PC-9 (cell line): ENCODE measurements at regions of chr5 and their contacts with region 1.

Region 1: GRCh38 chr5:23026252-23027170 is 173.4 kb upstream of the CDH12 start:
- DNase-seq: no peak
- H3K4me3 ChIP-seq: no peak overlapping the region
- H3K27ac ChIP-seq: no peak overlapping the region
- H3K4me1 ChIP-seq: no peaks in the 10 kb centered on the region
- H3K27me3 ChIP-seq: no peaks in the 10 kb centered on the region
- CTCF ChIP-seq: no peak

Region 2: DNA sequence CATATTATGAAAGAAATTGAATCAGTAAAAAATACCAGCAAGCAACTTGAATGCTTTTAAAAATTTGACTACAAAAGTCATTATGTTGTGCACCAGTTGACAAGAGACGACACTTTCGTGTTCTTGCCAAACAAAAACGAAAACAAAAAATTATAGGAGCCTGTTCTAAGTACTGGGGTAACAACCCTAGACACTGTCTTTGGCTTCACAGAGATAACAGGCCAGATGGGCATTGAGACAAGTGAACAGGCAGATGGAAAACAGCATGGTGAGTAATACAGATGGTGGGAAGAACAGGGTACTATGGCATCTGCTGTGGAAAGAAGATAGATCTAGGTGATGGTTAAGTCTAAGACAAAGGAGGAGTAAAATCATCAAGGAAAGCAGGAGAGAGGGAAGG is 272.4 kb before region 1 on chr5:
- CTCF ChIA-PET with region 1: no interaction called
- POLR2A ChIA-PET with region 1: no interaction called
- intact Hi-C with region 1: no loop called
- DNase-seq: no peak
- H3K4me3 ChIP-seq: no peak overlapping the region
- H3K27ac ChIP-seq: no peak overlapping the region
- H3K4me1 ChIP-seq: no peaks in the 10 kb centered on the region
- H3K27me3 ChIP-seq: no peaks in the 10 kb centered on the region
- CTCF ChIP-seq: no peak

Region 3: DNA sequence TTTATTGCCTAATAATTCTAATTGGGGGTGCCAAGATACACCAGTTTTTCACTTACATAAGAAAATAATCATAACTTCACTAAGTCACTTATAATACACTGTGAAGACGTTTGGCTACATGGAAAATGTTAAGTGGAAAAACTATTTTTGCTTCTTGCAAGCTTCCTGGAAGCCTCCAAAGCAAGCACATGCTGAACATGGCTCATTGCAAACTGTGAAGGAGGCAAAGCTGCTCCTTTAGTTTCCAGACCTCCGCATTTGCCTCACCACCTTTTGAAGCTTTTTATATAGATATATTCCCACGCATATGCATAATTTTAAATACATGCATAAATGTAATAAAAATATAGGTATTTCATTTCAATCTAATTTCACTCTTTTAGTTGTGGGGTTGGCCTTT is 195.3 kb after region 1 on chr5:
- CTCF ChIA-PET with region 1: no interaction called
- POLR2A ChIA-PET with region 1: interaction called, 11 read pairs
- intact Hi-C with region 1: no loop called
- DNase-seq: no peak
- H3K4me3 ChIP-seq: no peak overlapping the region
- H3K27ac ChIP-seq: no peak overlapping the region
- H3K4me1 ChIP-seq: no peaks in the 10 kb centered on the region
- H3K27me3 ChIP-seq: no peaks in the 10 kb centered on the region
- CTCF ChIP-seq: no peak